ENCODE measurements at regions of chr7 and their contacts with region 1.

Region 1: GRCh38 chr7:104923010-104923421 is 91.0 kb upstream of the KMT2E start:
- DNase-seq: peak; percentile 83
- ATAC-seq: peak; percentile 89 to 93

Region 2: DNA sequence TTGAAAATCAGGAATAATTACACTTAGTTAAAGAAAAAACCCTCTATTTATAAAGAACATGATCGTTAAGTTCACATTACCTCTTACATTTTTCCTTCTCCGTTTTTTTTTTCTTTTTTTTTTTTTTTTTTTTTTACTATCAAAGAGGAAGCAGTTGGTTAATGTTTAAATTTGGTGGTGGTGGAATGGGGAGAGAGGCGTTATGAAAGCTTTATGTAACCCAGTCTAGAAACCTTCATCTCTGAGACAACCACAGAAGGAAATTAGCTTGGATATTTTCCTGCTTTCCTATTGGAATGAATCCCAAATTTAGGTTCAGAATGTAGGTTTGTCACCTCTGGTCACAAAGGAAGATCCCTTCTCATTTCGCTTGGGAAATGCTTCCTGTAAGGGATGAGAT is 626.1 kb before region 1 on chr7:
- intact Hi-C with region 1: no loop called
- DNase-seq: no peak
- ATAC-seq: no peak

Region 3: DNA sequence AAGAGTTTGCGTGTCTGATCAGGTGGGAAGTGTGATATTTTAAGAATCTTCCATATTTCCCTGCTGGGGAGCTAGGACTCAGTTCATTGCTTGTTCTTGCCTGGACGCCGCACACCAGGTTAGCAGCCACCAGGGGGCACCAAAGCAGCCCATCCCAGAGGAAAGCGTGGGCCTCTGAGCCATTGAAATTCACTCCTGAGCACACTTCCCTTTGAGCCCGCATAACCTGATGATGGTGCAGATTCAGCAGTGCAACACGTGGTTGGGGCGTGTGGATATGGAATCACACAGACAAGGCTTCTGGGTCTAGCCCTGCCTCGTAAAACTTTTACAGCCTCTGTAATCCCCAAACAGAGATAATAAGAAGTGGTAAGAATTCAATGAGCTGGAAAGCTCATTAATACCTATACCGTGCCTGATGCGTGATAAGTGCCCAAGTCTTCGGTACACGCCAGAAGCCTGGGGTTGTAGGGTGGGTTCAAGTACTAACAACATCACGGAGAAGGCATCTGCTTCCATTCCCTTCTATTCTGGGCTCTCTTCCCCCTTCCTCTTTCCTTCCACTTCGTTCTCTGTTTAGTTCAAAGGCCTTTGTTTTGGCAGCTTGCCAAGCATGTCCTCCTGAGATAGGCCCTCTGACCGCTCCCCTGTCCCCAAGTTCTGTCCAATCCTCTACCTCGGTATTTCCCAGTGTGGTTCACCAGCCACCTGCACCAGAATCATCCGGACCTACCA is 39.1 kb before region 1 on chr7:
- intact Hi-C with region 1: loop called in 1 of 2 experiments (anchors 1 kb)
- DNase-seq: peak; percentile 91
- ATAC-seq: peak; percentile 97

Region 4: DNA sequence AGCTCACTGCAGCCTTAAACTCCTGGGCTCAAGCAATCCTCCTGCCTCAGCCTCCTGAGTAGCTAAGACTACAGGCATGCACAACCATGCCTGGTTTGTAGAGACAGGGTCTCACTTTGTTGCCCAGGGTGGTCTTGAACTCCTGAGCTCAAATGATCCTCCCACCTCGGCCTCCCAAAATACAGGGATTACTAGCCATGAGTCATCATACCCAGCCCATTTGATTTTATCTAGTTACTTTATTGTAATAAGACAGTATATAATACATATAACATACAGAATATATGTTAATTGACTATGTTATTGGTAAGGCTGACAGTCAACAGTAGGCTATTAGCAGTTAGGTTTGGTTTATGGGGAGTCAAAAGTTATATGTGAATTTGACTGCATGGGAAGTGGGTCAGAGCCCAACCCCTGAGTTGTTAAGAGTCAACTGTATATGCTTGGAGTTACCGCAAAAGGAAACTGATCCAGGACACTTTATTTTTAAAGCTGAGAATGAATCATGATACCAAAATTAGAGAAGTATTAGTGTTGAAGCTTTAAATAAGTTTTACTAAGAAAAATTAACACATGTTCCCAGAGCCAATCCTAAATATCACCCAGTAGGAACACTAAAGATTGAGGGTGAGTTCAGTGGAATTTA is 70.3 kb after region 1 on chr7:
- intact Hi-C with region 1: no loop called
- DNase-seq: no peak
- ATAC-seq: peak in 1 of 2 donors; percentile 21